H1 (cell line): ENCODE measurements at regions of chr3 and their contacts with region 1.

Region 1: GRCh38 chr3:54538346-54538745 is 389.5 kb downstream of the LRTM1 start:
- DNase-seq: peak; percentile 19 to 54
- H3K4me3 ChIP-seq: no peak overlapping the region
- H3K27ac ChIP-seq: no peak overlapping the region
- H3K4me1 ChIP-seq: peaks cover 0 to 1% (median 0%) of the 10 kb centered on the region in 4 experiments; a peak in 1 of 7 replicates
- H3K27me3 ChIP-seq: no peaks in the 10 kb centered on the region
- CTCF ChIP-seq: peak; percentile 54 to 80 (median 67)
- EP300 ChIP-seq: no peak
- POLR2A ChIP-seq: no peak
- RAD21 ChIP-seq: peak; percentile 64 to 84

Region 2: GRCh38 chr3:54322354-54322753 is 216.0 kb before region 1 on chr3:
- CTCF ChIA-PET with region 1: no interaction called
- POLR2A ChIA-PET with region 1: no interaction called
- DNase-seq: peak in 1 of 2 experiments; percentile 23
- H3K4me3 ChIP-seq: no peak overlapping the region
- H3K27ac ChIP-seq: no peak overlapping the region
- H3K4me1 ChIP-seq: peaks cover 0 to 3% (median 2%) of the 10 kb centered on the region in 4 experiments; a peak in 3 of 7 replicates
- H3K27me3 ChIP-seq: no peaks in the 10 kb centered on the region
- CTCF ChIP-seq: no peak
- EP300 ChIP-seq: no peak
- POLR2A ChIP-seq: no peak
- RAD21 ChIP-seq: no peak

Region 3: DNA sequence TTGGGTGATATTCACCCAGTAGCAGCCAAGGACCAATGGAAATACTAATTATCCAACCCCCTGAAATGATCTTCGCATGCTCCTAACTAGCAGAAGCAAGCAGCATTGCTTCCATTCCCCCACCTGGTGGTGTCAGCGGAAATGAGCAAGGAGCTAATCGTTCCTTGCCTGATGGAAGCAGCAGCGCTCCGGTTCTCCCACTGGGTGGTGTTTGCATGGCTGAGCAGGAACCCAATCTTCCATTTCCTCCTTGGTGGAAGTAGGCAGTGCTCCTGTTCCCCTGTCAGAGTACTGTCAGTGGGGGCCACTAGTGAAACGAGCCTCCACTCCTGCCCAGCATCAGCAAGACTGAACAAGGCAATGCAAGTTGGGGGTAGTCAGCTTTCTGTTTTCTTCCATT is 104.5 kb before region 1 on chr3:
- CTCF ChIA-PET with region 1: interaction called, 36 read pairs
- POLR2A ChIA-PET with region 1: no interaction called
- DNase-seq: peak; percentile 59 to 69
- H3K4me3 ChIP-seq: no peak overlapping the region
- H3K27ac ChIP-seq: no peak overlapping the region
- H3K4me1 ChIP-seq: 0 out of 7 replicates have a peak, but pooled peaks cover 0 to 1% (median 0%) of the 10 kb centered on the region in 4 experiments
- H3K27me3 ChIP-seq: no peaks in the 10 kb centered on the region
- CTCF ChIP-seq: peak; percentile 87 to 99 (median 98)
- EP300 ChIP-seq: no peak
- POLR2A ChIP-seq: no peak
- RAD21 ChIP-seq: peak; percentile 79 to 88

Region 4: DNA sequence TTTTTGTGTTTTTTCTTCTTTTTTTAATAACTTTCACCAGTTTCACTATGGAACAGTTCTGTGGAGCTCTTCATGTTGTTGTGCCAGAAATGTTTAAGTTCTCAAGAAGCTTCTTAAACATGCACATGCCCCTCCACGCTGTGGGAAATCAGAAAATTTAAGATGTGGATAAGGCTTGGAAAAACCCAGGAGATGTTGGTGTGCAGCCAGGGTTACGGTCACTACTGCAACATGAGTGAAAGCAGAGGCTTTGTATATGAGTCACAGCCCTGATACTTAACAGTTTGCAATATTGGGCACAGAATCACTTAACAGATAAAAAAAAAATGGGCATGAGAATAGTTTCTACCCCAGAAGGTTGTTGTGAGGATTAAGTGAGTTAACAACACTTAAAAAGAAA is 10.4 kb before region 1 on chr3:
- CTCF ChIA-PET with region 1: interaction called, 14 read pairs
- POLR2A ChIA-PET with region 1: interaction called, 4 read pairs
- DNase-seq: no peak
- H3K4me3 ChIP-seq: no peak overlapping the region
- H3K27ac ChIP-seq: no peak overlapping the region
- H3K4me1 ChIP-seq: peaks cover 0 to 4% (median 0%) of the 10 kb centered on the region in 4 experiments; a peak in 1 of 7 replicates
- H3K27me3 ChIP-seq: no peaks in the 10 kb centered on the region
- CTCF ChIP-seq: no peak
- EP300 ChIP-seq: no peak
- POLR2A ChIP-seq: no peak
- RAD21 ChIP-seq: no peak

Region 5: DNA sequence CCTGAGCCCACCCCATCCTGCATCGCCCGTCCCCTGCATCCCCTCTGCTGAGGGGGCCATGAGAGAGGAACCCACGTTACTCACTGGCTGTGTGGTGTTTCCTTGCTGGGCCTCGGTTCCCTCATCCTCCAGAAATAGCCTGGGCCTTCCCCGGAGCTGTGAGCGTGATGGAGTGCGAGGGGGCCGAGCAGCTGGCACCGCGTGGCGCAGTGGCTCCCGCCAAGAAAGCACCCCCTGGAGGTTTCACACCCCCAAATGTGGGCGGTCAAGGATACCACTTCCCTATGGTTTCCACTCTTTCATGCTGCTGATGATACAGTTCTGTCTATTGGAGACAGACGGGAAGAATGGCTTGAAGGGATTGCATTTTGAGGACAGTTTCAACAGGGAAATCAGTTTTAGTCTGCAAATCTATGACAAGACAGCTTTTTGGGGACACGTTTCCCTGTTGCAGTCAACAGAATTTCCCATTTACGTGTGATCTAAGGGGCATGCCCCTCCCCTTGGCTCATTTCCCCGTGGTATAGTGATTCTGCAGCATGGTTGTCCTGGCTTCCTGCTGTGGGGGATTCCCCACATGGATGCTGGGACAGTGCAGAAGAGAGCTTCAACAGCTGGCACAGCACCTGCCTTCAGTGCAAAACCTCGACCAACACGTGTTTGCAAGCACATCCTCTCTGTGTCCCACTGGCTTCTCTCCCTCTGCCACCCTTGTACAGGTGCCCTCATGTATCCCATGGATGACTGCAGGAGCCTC is 12.1 kb after region 1 on chr3:
- CTCF ChIA-PET with region 1: interaction called, 23 read pairs
- POLR2A ChIA-PET with region 1: interaction called, 4 read pairs
- DNase-seq: no peak
- H3K4me3 ChIP-seq: no peak overlapping the region
- H3K27ac ChIP-seq: no peak overlapping the region
- H3K4me1 ChIP-seq: peaks cover 0 to 3% (median 0%) of the 10 kb centered on the region in 4 experiments; a peak in 1 of 7 replicates
- H3K27me3 ChIP-seq: no peaks in the 10 kb centered on the region
- CTCF ChIP-seq: no peak
- EP300 ChIP-seq: no peak
- POLR2A ChIP-seq: no peak
- RAD21 ChIP-seq: no peak